ENCODE measurements at regions of chr16 and their contacts with region 1.

Region 1: DNA sequence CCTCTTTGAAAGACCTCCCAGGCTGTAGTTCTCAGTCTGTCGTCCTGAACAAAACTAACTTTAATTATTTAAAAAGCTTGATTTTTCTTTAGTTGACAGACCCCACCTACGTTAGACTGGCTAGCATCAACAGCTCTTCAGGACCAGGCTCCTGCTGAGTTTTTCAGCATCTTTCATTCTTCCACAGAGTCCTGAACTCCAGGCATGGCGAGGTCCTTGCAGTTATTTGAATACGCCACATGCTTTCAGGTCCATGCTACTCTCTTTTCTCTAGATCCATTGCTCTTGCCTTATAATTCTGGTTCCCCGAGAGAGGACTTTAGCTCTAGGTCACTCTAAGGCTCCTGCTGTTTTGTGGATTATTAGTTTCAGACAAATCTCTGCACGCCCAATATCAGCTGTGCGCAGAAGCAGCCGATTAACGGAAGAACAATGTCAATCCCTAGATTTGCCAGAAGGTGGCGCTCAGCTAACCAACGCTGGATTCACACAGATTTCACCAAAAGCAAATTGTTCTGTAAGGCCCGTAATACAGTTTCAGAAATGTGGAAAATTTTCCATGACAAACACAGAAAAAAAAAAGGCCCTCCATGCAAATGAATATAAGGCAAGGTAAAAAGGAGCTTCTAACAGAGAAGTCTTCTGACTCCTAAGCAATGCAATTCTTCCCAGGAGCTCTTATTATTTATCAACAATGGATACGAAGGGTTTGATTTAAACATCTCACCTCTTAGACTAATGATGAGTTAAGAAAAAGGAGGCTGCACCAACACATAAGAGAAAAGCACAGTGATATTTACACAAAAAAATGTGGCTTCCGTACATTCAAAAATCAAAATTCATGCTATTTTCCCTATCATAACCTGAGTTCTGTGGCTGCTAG is 33.5 kb upstream of the BCO1 start:
- DNase-seq: peak in 5 of 7 donors; percentile 29 to 74 (median 49)
- H3K4me3 ChIP-seq: no peak overlapping the region
- H3K27ac ChIP-seq: no peak overlapping the region
- H3K4me1 ChIP-seq: no peaks in the 10 kb centered on the region
- H3K27me3 ChIP-seq: no peaks in the 10 kb centered on the region
- CTCF ChIP-seq: peak; percentile 36 to 72 (median 62)
- POLR2A ChIP-seq: no peak

Region 2: GRCh38 chr16:80883159-80883642 is 321.8 kb before region 1 on chr16:
- intact Hi-C with region 1: no loop called
- DNase-seq: no peak
- H3K4me3 ChIP-seq: no peak overlapping the region
- H3K27ac ChIP-seq: no peak overlapping the region
- H3K4me1 ChIP-seq: peaks cover 0 to 3% of the 10 kb centered on the region in 2 donors
- H3K27me3 ChIP-seq: no peaks in the 10 kb centered on the region
- CTCF ChIP-seq: no peak
- POLR2A ChIP-seq: no peak

Region 3: GRCh38 chr16:81737885-81738786 is 533.1 kb after region 1 on chr16:
- intact Hi-C with region 1: loop called in 1 of 2 experiments (anchors 5 kb)
- DNase-seq: peak; percentile 80 to 93 (median 87)
- H3K4me3 ChIP-seq: peak overlapping the region in 1 of 4 donors; percentile 41
- H3K27ac ChIP-seq: no peak overlapping the region
- H3K4me1 ChIP-seq: peaks cover 5 to 10% of the 10 kb centered on the region in 2 donors
- H3K27me3 ChIP-seq: no peaks in the 10 kb centered on the region
- CTCF ChIP-seq: peak; percentile 71 to 97 (median 92)
- POLR2A ChIP-seq: no peak

Measured in adrenal gland (tissue), 19 donors.